ENCODE measurements at regions of chr6 and their contacts with region 1.

Region 1: GRCh38 chr6:160992061-160992979 is 751 bp downstream of the MAP3K4 start:
- DNase-seq: no peak
- H3K4me3 ChIP-seq: peak overlapping the region; percentile 84
- H3K27ac ChIP-seq: peak overlapping the region; percentile 75
- H3K27me3 ChIP-seq: no peaks in the 10 kb centered on the region
- CTCF ChIP-seq: peak; percentile 84

Region 2: DNA sequence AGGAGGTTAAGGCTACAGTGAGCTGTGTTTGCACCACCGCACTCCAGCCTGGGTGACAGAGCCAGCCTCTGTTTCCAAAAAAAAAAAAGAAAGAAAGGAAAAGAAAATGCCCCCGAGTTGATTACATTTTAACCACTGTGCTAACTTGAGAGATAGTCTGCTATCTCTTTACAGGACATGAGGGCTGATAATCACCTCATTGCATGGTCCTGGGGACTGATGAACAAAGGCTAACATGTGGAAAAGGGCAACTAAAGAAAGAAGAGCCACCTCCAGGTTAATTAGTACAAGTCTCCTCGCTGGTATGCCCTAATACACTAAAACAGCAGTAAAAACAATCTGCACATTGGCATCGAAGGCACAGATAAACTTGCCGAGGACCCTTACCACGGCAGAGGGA is 294.5 kb before region 1 on chr6:
- CTCF ChIA-PET with region 1: no interaction called
- POLR2A ChIA-PET with region 1: no interaction called
- DNase-seq: no peak
- H3K4me3 ChIP-seq: no peak overlapping the region
- H3K27ac ChIP-seq: no peak overlapping the region
- H3K27me3 ChIP-seq: no peaks in the 10 kb centered on the region
- CTCF ChIP-seq: no peak

Region 3: GRCh38 chr6:161011492-161012480 is 19.5 kb after region 1 on chr6:
- CTCF ChIA-PET with region 1: interaction called, 22 read pairs
- POLR2A ChIA-PET with region 1: interaction called, 4 read pairs
- DNase-seq: no peak
- H3K4me3 ChIP-seq: no peak overlapping the region
- H3K27ac ChIP-seq: no peak overlapping the region
- H3K27me3 ChIP-seq: no peaks in the 10 kb centered on the region
- CTCF ChIP-seq: no peak

Measured in AG04450 (cell line).